H1 (cell line): ENCODE measurements at regions of chr1 and their contacts with region 1.

Region 1: GRCh38 chr1:159798893-159799292 is 3.3 kb upstream of the FCRL6 start:
- DNase-seq: peak in 1 of 2 experiments; percentile 59
- H3K4me3 ChIP-seq: no peak overlapping the region
- H3K27ac ChIP-seq: no peak overlapping the region
- H3K4me1 ChIP-seq: no peaks in the 10 kb centered on the region
- H3K27me3 ChIP-seq: no peaks in the 10 kb centered on the region
- CTCF ChIP-seq: peak; percentile 52 to 96 (median 91)
- EP300 ChIP-seq: no peak
- POLR2A ChIP-seq: no peak
- RAD21 ChIP-seq: peak; percentile 83 to 85

Region 2: DNA sequence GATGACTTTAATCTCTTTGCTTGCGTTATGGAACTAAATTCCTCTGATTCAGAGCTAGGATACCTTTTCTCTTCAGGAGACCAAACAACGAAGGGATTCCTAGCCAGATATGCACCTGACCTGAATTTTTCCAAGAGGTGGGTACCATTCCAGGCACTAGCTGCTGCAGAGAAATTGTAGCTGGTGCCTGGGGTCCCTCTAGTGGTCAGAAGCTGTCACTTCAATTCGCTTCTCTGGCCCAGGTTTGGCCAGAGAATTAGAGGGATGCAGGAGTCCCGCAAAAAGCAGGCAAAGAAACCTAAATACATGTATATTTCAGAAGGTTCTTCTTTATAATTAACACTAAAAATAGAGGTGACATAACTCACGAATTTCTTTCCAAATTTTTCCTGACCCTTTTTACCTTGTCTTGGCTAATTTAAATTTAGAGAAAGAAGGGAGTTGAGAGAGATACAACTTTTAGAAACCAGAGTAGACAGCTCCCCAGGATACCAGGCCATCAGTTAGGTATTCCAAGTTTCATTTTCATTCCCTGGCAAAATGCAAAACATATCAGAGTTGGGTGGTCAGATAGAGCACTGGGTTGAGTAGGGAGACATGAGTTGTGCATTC is 584.6 kb before region 1 on chr1:
- CTCF ChIA-PET with region 1: interaction called, 43 read pairs
- POLR2A ChIA-PET with region 1: no interaction called
- DNase-seq: peak in 1 of 2 experiments; percentile 65
- H3K4me3 ChIP-seq: no peak overlapping the region
- H3K27ac ChIP-seq: no peak overlapping the region
- H3K4me1 ChIP-seq: peaks cover 6 to 14% (median 11%) of the 10 kb centered on the region in 4 experiments
- H3K27me3 ChIP-seq: no peaks in the 10 kb centered on the region
- CTCF ChIP-seq: peak; percentile 77 to 89 (median 88)
- EP300 ChIP-seq: no peak
- POLR2A ChIP-seq: no peak
- RAD21 ChIP-seq: peak; percentile 82 to 85

Region 3: DNA sequence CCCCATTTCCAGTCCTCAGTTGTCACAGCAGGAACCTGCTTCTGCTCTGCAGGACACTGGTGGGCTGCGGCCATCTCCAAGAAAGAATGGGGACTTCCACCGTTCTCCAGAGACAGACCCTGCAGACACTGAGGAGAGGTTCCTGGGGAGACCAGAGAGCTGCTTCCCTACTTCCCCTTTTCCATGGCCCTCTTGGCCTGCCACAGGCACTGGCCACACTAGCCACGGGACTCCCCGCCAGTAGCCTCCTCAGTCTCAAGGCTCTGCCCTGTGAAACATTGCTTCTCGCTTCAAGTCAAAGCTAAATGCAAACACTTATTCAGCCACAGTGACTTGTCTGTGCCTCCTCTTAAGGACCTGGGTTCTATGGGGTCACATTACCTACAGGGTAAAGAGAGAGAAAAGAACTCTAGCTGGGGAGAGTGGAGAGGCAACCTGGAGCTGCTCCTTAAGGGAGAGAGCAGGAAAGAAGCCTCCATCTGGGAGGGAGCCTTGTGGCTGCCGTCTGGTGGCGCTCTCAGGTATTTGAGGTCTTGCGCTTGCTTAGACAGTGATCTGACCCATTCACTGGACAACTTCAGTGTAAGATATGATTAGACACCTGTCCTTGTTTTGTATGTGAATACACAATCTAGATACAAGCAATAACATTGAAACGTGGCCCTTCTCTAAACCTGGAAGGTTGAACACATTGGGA is 22.4 kb after region 1 on chr1:
- CTCF ChIA-PET with region 1: interaction called, 157 read pairs
- POLR2A ChIA-PET with region 1: interaction called, 5 read pairs
- DNase-seq: no peak
- H3K4me3 ChIP-seq: no peak overlapping the region
- H3K27ac ChIP-seq: no peak overlapping the region
- H3K4me1 ChIP-seq: 0 out of 7 replicates have a peak, but pooled peaks cover 0 to 3% (median 0%) of the 10 kb centered on the region in 4 experiments
- H3K27me3 ChIP-seq: no peaks in the 10 kb centered on the region
- CTCF ChIP-seq: peak in 2 of 3 experiments; percentile 34 to 48; a peak in 3 of 4 replicates
- EP300 ChIP-seq: no peak
- POLR2A ChIP-seq: no peak
- RAD21 ChIP-seq: peak in 1 of 2 experiments; percentile 15; a peak in 2 of 4 replicates

Region 4: DNA sequence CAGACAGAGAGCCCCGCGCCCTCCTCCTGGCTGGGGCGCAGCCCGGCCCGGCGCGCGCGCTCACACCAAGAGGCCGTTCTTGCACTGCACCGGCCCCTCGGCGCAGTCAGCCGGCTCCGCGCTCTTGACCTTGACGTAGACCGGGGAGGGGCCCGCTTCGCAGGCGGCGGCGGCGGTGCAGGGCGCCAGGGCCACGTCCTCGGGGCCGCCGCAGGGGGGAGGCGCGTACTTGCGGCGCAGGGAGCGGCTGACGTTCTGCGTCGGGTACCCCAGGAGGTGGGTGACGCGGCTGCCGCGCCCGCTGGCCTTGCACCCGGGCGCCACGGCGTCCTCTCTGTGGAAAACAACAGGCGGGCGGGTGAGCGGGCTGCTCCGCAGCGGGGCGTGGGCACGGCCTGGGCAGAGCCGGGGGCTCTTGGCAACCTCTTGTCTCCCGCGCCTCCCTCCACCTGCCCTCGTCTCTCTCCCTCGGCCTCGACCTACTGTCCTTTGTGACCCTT is 55.9 kb after region 1 on chr1:
- CTCF ChIA-PET with region 1: interaction called, 58 read pairs
- POLR2A ChIA-PET with region 1: no interaction called
- DNase-seq: peak in 1 of 2 experiments; percentile 73
- H3K4me3 ChIP-seq: peak overlapping the region; percentile 38 to 84 (median 53)
- H3K27ac ChIP-seq: no peak overlapping the region
- H3K4me1 ChIP-seq: no peaks in the 10 kb centered on the region
- H3K27me3 ChIP-seq: peaks cover 7 to 33% (median 24%) of the 10 kb centered on the region in 4 experiments
- CTCF ChIP-seq: no peak
- EP300 ChIP-seq: no peak
- POLR2A ChIP-seq: no peak
- RAD21 ChIP-seq: no peak

Region 5: DNA sequence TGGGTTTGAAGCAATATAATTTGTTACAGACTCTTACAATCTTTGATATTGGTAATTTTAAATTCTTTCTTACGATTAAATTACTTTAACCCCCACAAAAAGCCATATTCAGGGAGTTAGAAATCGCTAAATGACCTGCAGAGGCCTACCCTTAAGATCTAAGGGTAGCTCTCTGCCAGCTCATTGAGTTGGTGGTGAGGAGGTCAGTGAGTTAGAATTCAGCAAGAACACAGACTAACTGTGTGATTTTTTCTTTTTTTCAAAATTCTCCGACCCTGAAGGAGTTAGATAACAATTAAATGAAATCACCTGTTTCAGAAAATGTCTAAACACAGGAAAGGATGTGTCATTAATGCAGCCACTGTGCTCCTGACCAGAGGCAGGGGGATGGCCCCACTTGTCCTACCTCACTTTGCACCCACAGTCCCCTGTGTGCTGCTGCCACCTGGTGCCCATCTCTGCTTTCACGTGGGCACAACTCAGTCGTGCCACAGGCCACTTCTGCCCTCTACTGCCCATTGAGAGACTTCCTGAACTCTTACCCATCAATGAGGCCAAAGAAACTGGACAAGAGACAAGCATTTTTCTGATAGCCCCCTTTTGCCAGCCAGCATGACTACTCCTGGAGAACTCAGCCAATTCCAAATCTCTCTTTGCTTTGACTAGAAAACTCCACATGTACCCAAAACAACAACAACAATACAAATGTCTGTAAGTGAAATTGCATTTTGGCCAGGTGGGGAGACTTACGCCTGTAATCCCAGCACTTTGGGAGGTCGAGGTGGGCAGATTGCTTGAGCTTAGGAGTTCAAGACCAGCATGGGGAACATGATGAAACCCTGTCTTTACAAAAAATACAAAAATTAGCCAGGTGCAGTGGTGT is 92.6 kb after region 1 on chr1:
- CTCF ChIA-PET with region 1: interaction called, 645 read pairs
- POLR2A ChIA-PET with region 1: interaction called, 10 read pairs
- DNase-seq: peak; percentile 66 to 77
- H3K4me3 ChIP-seq: no peak overlapping the region
- H3K27ac ChIP-seq: no peak overlapping the region
- H3K4me1 ChIP-seq: no peaks in the 10 kb centered on the region
- H3K27me3 ChIP-seq: no peaks in the 10 kb centered on the region
- CTCF ChIP-seq: peak; percentile 99 to 100 (median 100)
- EP300 ChIP-seq: no peak
- POLR2A ChIP-seq: no peak
- RAD21 ChIP-seq: peak; percentile 100